ENCODE measurements at regions of chr4 and their contacts with region 1.

Region 1: GRCh38 chr4:15231265-15232091 is 196.4 kb upstream of the C1QTNF7 start:
- DNase-seq: no peak
- H3K4me3 ChIP-seq: no peak overlapping the region
- H3K27ac ChIP-seq: peak overlapping the region in 1 of 4 donors; percentile 12
- H3K4me1 ChIP-seq: peaks cover 9 to 31% (median 24%) of the 10 kb centered on the region in 4 donors
- H3K27me3 ChIP-seq: no peaks in the 10 kb centered on the region
- CTCF ChIP-seq: peak; percentile 73
- EP300 ChIP-seq: no peak
- POLR2A ChIP-seq: no peak

Region 2: DNA sequence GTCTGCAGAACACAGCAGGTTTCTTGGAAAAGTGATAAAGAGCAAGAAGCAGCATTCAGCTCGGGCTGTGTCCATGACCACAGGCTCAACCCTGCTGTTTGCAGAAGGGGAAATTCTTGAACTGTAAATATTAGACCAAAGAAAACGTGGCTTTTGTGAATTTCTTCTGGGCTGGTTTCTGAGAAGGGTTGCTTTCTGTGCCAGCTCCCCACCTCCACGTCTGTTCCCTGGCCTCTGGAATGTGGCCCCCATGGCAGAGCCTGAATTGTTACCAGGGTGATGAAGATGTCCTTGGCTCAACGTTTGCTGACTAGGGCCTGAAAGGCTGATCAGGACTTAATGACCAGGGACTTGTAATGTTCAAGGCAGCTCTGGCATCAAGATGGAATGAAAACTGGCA is 113.2 kb before region 1 on chr4:
- intact Hi-C with region 1: no loop called
- DNase-seq: no peak
- H3K4me3 ChIP-seq: no peak overlapping the region
- H3K27ac ChIP-seq: no peak overlapping the region
- H3K4me1 ChIP-seq: peaks cover 0 to 6% (median 0%) of the 10 kb centered on the region in 4 donors
- H3K27me3 ChIP-seq: no peaks in the 10 kb centered on the region
- CTCF ChIP-seq: no peak
- EP300 ChIP-seq: no peak
- POLR2A ChIP-seq: no peak

Region 3: DNA sequence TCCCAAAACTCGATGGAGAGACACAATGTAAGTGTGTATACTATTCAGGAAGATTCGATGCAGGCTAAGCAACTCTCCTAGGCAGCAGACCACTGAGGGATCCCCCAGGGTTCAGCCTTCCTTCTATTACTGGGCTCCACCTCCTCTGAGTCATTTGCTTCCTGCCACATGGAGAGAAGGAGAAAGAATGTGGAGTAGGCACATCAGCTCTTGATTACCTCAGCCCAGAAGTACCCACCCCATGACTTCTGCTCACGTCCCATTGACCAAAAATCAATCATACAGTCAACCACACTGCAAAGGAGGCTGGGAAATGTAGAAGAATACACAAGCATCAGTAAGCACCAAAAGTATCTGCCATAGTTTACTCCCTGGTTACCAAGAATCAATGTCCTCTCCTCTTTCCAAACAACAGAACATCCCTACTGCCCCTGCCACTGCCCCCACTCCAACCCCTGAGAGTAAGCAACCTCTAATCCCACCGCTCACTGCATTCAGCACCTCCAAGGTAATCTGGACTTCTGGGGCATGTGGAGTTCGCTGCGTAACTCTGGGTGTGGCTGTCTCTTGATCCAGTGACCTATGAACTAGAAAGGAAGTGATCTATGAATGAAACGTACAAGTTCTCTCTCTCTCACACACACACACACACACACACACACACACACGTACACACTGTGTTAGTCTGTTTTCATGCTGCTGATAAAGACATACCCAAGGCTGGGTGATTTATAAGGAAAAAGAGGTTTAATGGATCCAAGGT is 105.1 kb after region 1 on chr4:
- intact Hi-C with region 1: loop called (anchors 10 kb)
- DNase-seq: no peak
- H3K4me3 ChIP-seq: no peak overlapping the region
- H3K27ac ChIP-seq: peak overlapping the region in 2 of 4 donors; percentile 32 to 48
- H3K4me1 ChIP-seq: peaks cover 0 to 55% (median 36%) of the 10 kb centered on the region in 4 donors
- H3K27me3 ChIP-seq: no peaks in the 10 kb centered on the region
- CTCF ChIP-seq: no peak
- EP300 ChIP-seq: no peak
- POLR2A ChIP-seq: no peak